ENCODE measurements at regions of chr5 and their contacts with region 1.

Region 1: GRCh38 chr5:143244000-143244736 is 159.3 kb downstream of the NR3C1 start:
- DNase-seq: peak; percentile 98
- ATAC-seq: peak; percentile 86
- H3K4me3 ChIP-seq: no peak overlapping the region
- H3K27ac ChIP-seq: peak overlapping the region; percentile 78
- H3K4me1 ChIP-seq: peaks cover 38% of the 10 kb centered on the region
- H3K27me3 ChIP-seq: no peaks in the 10 kb centered on the region
- CTCF ChIP-seq: no peak
- POLR2A ChIP-seq: peak; percentile 67; the same call in 1 of the 2 replicates
- RAD21 ChIP-seq: peak; percentile 53

Region 2: GRCh38 chr5:143002459-143003328 is 241.5 kb before region 1 on chr5:
- CTCF ChIA-PET with region 1: no interaction called
- POLR2A ChIA-PET with region 1: no interaction called
- dilution Hi-C with region 1: no loop called
- in situ Hi-C with region 1: no loop called
- intact Hi-C with region 1: loop called (anchors 2 kb)
- DNase-seq: peak; percentile 86
- ATAC-seq: peak; percentile 59
- H3K4me3 ChIP-seq: no peak overlapping the region
- H3K27ac ChIP-seq: peak overlapping the region; percentile 81
- H3K4me1 ChIP-seq: peaks cover 12% of the 10 kb centered on the region
- H3K27me3 ChIP-seq: no peaks in the 10 kb centered on the region
- CTCF ChIP-seq: peak; percentile 63
- POLR2A ChIP-seq: no peak; the same call in 1 of the 2 replicates
- RAD21 ChIP-seq: peak; percentile 62

Region 3: GRCh38 chr5:143106174-143106573 is 138.0 kb before region 1 on chr5:
- CTCF ChIA-PET with region 1: interaction called, 3 read pairs
- POLR2A ChIA-PET with region 1: no interaction called
- dilution Hi-C with region 1: no loop called
- in situ Hi-C with region 1: no loop called
- intact Hi-C with region 1: loop called (anchors 5 kb)
- DNase-seq: peak; percentile 77
- ATAC-seq: peak; percentile 78
- H3K4me3 ChIP-seq: no peak overlapping the region
- H3K27ac ChIP-seq: no peak overlapping the region
- H3K4me1 ChIP-seq: peaks cover 2% of the 10 kb centered on the region; the same call in 1 of the 2 replicates
- H3K27me3 ChIP-seq: no peaks in the 10 kb centered on the region
- CTCF ChIP-seq: peak; percentile 46
- POLR2A ChIP-seq: no peak
- RAD21 ChIP-seq: peak; percentile 68

Region 4: DNA sequence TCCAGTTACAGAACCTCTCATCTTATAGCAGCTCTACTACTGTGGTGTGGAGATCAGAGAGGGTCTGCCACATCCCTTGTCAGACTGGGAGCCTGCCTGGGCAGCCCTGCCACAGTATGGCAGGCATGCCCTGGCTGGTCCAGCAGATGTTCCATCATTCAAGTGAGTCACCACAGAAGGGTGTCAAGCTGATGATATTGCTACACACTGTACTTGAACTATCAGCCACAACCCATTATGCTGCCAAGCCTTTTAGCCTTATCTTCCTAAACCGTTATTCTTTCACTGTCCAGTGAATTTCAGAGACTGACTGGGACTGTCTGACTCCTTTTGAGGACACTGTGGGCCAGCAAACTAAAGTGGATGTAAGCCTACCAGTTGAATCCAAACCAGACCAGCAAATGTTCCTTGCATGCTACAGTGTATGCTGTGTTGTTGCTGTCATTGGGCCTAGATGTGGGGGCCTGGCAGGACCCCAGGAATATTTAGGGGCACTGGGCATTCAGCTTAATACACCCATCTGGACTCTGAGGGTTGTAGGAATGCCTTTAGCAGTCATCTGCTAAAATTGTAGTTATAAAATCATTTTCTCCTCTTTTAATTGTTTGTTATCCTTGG is 43.3 kb before region 1 on chr5:
- CTCF ChIA-PET with region 1: no interaction called
- POLR2A ChIA-PET with region 1: no interaction called
- dilution Hi-C with region 1: no loop called
- in situ Hi-C with region 1: no loop called
- intact Hi-C with region 1: loop called (anchors 5 kb)
- DNase-seq: peak; percentile 81
- ATAC-seq: peak; percentile 59
- H3K4me3 ChIP-seq: no peak overlapping the region
- H3K27ac ChIP-seq: no peak overlapping the region
- H3K4me1 ChIP-seq: peaks cover 6% of the 10 kb centered on the region
- H3K27me3 ChIP-seq: no peaks in the 10 kb centered on the region
- CTCF ChIP-seq: no peak
- POLR2A ChIP-seq: no peak
- RAD21 ChIP-seq: no peak